Activated CD8-positive, alpha-beta T cell treated with anti-CD3 and anti-CD28 coated beads for 36 hours (primary cell): ENCODE measurements at regions of chr7 and their contacts with region 1.

Region 1: GRCh38 chr7:3106361-3106826 is 62.7 kb upstream of the CARD11 start:
- DNase-seq: peak; percentile 78
- ATAC-seq: peak; percentile 84
- H3K4me3 Mint-ChIP-seq: peak overlapping the region; percentile 1
- H3K27ac Mint-ChIP-seq: peak overlapping the region; percentile 94
- H3K4me1 Mint-ChIP-seq: peaks cover 78% of the 10 kb centered on the region
- H3K27me3 Mint-ChIP-seq: no peaks in the 10 kb centered on the region
- CTCF ChIP-seq: no peak

Region 2: DNA sequence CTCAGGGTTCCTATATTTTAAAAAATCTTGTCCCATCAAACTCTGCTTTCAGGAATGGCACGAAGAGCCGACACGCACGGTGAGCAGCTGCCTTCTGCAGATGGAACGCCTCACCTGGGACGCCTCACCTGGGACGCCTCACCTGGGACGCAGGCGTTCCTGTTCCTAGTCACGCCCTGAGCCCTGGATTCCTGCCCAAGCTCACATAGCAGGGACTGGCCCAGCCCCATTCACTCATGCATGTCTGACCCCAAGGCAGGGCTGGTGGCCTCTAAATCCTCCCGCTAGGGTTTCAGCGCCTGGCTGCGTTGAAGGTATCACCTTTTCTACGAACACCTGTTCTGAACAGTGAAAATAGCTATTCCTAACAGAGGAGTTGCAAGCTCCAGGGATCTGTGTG is 112.5 kb before region 1 on chr7:
- CTCF ChIA-PET with region 1: no interaction called
- POLR2A ChIA-PET with region 1: no interaction called
- intact Hi-C with region 1: no loop called
- DNase-seq: no peak
- ATAC-seq: no peak
- H3K4me3 Mint-ChIP-seq: no peak overlapping the region
- H3K27ac Mint-ChIP-seq: no peak overlapping the region
- H3K4me1 Mint-ChIP-seq: peaks cover 13% of the 10 kb centered on the region
- H3K27me3 Mint-ChIP-seq: no peaks in the 10 kb centered on the region
- CTCF ChIP-seq: no peak

Region 3: DNA sequence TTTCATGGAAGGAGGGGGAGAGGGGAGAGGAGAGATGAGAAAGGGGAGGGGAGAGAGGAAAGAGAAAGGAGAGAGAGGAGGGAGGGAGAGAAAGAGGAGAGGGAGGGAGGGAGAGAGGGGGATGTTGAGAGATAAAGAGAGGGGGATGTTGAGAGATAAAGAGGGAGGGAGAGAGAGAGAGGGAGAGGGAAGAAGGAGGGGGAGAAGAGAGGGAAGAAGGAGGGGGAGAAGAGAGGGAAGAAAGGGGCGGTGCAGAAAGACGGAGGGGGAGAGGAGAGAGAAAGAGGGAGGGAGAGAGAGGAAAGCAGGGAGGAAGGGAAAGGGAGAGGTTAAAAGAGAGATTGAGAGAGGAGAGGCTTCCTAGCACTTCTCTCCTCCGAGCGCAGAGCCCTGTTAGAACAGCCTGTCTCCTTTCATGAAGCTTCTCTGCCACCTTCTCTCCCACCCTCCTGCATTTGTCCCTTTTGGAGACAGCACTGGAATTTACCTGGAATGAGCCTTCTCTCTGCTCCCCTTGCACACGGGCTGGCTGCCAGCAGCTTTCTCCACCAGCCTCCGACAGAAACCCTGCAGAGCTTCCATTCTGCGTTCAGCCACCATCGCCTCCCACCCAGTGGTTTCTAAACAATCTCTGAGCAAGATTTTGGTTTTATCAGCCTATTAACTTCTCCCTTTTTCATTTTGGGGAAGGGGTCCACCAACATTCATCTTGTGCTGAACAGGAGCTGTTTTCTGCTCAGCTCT is 11.3 kb after region 1 on chr7:
- CTCF ChIA-PET with region 1: interaction called, 8 read pairs
- POLR2A ChIA-PET with region 1: interaction called, 12 read pairs
- intact Hi-C with region 1: no loop called
- DNase-seq: peak; percentile 79
- ATAC-seq: peak; percentile 63
- H3K4me3 Mint-ChIP-seq: peak overlapping the region; percentile 80
- H3K27ac Mint-ChIP-seq: peak overlapping the region; percentile 93
- H3K4me1 Mint-ChIP-seq: peaks cover 72% of the 10 kb centered on the region
- H3K27me3 Mint-ChIP-seq: no peaks in the 10 kb centered on the region
- CTCF ChIP-seq: no peak